ENCODE measurements at regions of chr13 and their contacts with region 1.

Region 1: DNA sequence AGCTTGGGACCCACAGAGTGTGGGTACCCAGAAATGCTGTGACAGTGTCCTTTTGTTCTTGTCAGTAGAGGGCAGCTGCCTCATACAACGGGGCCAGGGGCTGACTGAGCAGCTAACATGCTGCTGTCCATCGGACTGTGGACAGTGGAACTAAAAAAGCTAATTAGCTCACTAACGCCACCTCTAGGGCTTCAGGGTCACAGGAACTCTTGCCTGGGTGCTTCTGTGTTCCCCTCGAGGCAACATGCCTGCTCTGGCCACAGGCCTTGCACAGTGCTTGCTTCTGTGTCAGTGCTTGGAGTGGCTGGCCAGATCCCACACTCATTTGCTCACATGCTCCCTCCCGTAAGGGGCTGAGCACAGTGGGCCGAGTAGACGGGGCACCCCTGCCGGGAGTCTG is 377.0 kb downstream of the OLFM4 start:
- DNase-seq: no peak
- H3K4me3 ChIP-seq: no peak overlapping the region
- H3K27ac ChIP-seq: no peak overlapping the region
- H3K4me1 ChIP-seq: no peaks in the 10 kb centered on the region
- H3K27me3 ChIP-seq: no peaks in the 10 kb centered on the region
- CTCF ChIP-seq: no peak
- EP300 ChIP-seq: no peak
- POLR2A ChIP-seq: no peak

Region 2: DNA sequence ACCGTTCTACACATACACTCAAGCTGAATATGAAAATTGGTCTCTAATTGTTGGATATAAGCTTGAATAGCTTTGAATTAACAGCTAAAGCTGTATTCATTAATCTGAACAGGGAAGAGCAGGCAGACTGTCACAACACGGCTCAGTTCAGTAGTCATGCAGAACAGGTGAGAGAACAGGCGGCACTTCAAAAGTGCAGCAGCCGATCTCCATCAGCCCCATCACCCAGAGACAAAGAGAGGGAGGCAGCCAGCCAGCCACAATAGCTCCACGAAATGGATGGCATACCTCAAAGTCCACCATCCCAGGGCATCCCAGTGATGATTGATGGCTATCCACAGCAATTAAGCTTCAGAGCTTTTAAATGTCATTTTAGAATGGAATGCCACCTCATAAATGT is 42.2 kb after region 1 on chr13:
- in situ Hi-C with region 1: no loop called
- intact Hi-C with region 1: loop called (anchors 1 kb)
- DNase-seq: no peak
- H3K4me3 ChIP-seq: no peak overlapping the region
- H3K27ac ChIP-seq: no peak overlapping the region
- H3K4me1 ChIP-seq: no peaks in the 10 kb centered on the region
- H3K27me3 ChIP-seq: no peaks in the 10 kb centered on the region
- CTCF ChIP-seq: no peak
- EP300 ChIP-seq: no peak
- POLR2A ChIP-seq: no peak